ENCODE measurements at regions of chr2 and their contacts with region 1.

Region 1: DNA sequence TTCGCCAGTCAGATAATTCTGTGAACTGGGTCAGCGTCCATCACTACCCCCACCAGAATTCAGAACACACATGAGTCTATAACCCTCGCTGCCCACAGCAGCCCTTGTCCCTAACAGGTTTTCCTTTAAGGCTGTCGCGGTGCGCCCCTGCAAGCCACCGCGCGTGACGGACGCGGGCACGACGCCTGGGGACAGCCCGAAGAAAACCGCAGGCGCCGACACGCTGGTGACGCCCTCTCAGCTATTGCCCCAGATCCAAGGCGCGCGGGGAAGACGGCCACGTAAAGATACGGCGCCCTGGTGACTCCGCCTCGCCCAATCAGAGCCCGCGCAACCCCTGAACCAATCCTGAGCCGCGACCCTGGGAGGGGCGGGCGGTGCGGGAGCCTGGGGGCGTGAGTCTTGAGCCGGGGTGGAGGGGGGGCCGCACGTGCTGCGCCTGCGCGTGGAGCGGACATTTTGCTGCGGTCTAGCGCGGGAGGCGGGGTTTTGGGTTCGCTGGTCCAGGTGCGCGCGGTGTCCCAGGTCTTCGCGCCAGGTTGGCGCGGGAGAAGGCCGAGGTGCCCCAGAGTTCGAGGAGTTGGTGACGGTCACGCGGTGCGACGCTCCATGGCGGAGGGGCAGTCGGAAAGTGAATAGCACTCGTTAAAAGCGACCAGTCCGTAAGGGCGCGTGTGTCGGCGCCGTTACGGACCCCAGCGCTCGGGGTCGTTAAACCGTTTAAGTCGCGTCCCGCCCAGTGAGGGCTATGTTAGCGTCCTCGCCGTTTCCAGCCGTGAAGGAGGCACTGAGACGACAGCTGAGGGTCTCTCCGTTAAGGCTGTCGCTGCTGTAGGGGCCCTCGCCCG is 15.9 kb downstream of the NMUR1 start:
- DNase-seq: peak; percentile 93 to 99 (median 98)
- H3K4me3 ChIP-seq: peak overlapping the region; percentile 80 to 93 (median 86)
- H3K4me3 Mint-ChIP-seq: peak overlapping the region; percentile 83 to 95
- H3K27ac ChIP-seq: peak overlapping the region; percentile 67 to 89
- H3K27ac Mint-ChIP-seq: peak overlapping the region; percentile 91 to 97 (median 94)
- H3K4me1 ChIP-seq: peaks cover 6 to 11% of the 10 kb centered on the region in 2 donors
- H3K4me1 Mint-ChIP-seq: peaks cover 12% of the 10 kb centered on the region
- H3K27me3 ChIP-seq: no peaks in the 10 kb centered on the region
- H3K27me3 Mint-ChIP-seq: peaks cover 0 to 6% (median 5%) of the 10 kb centered on the region in 3 donors
- CTCF ChIP-seq: no peak

Region 2: GRCh38 chr2:231241755-231242507 is 272.4 kb before region 1 on chr2:
- intact Hi-C with region 1: no loop called
- DNase-seq: peak; percentile 29 to 34 (median 33)
- H3K4me3 ChIP-seq: peak overlapping the region in 1 of 3 experiments; percentile 22
- H3K4me3 Mint-ChIP-seq: peak overlapping the region in 1 of 2 donors; percentile 64
- H3K27ac ChIP-seq: peak overlapping the region in 1 of 2 donors; percentile 50
- H3K27ac Mint-ChIP-seq: peak overlapping the region; percentile 10 to 88 (median 63)
- H3K4me1 ChIP-seq: peaks cover 22 to 27% of the 10 kb centered on the region in 2 donors
- H3K4me1 Mint-ChIP-seq: peaks cover 26% of the 10 kb centered on the region
- H3K27me3 ChIP-seq: no peaks in the 10 kb centered on the region
- H3K27me3 Mint-ChIP-seq: peaks cover 2 to 3% (median 3%) of the 10 kb centered on the region in 3 donors
- CTCF ChIP-seq: no peak

Region 3: DNA sequence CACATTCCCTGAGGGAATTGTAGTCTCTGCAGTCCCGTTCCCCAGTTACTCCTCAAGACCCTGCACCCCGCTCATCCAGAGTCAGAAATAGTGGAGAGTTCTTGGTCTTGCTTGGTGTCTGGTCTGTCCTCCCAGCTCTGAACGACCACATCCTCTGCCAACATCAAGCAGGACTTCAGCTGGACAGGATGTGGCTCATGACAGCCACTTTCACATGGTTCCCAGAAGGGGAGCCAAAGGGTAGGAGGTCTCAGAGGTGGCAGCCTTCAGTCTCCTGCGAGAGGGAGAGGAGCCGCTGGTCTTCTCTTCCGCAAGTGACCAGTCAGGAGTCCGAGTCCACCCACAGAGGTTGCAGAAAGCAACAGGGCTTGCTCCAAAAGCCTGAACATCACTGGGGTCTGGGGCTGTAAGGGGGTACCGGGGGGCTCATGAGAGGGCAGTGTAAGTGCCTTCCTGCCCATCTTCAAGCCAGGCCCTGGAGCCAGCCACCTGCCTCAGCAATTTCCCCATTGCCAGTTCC is 89.0 kb before region 1 on chr2:
- intact Hi-C with region 1: no loop called
- DNase-seq: no peak
- H3K4me3 ChIP-seq: no peak overlapping the region
- H3K4me3 Mint-ChIP-seq: no peak overlapping the region
- H3K27ac ChIP-seq: no peak overlapping the region
- H3K27ac Mint-ChIP-seq: no peak overlapping the region
- H3K4me1 ChIP-seq: no peaks in the 10 kb centered on the region
- H3K4me1 Mint-ChIP-seq: peaks cover 9% of the 10 kb centered on the region
- H3K27me3 ChIP-seq: no peaks in the 10 kb centered on the region
- H3K27me3 Mint-ChIP-seq: peaks cover 1 to 3% (median 1%) of the 10 kb centered on the region in 3 donors
- CTCF ChIP-seq: no peak

Region 4: GRCh38 chr2:231463698-231464575 is 50.4 kb before region 1 on chr2 and contains the start of gene NCL:
- intact Hi-C with region 1: loop called (anchors 5 kb)
- DNase-seq: peak; percentile 96 to 97 (median 97)
- H3K4me3 ChIP-seq: peak within 1 kb of the TSS; percentile 75 to 93 (median 85)
- H3K4me3 Mint-ChIP-seq: peak within 1 kb of the TSS; percentile 94 to 96
- H3K27ac ChIP-seq: peak within 1 kb of the TSS; percentile 91 to 98
- H3K27ac Mint-ChIP-seq: peak within 1 kb of the TSS; percentile 97 to 99 (median 99)
- H3K4me1 ChIP-seq: peaks cover 30 to 38% of the 10 kb centered on the region in 2 donors
- H3K4me1 Mint-ChIP-seq: peaks cover 32% of the 10 kb centered on the region
- H3K27me3 ChIP-seq: no peaks in the 10 kb centered on the region
- H3K27me3 Mint-ChIP-seq: peaks cover 0 to 2% (median 0%) of the 10 kb centered on the region in 3 donors
- CTCF ChIP-seq: no peak
- polyA plus RNA-seq, gene NCL: 26.2 to 143 (median 106) TPM

Region 5: DNA sequence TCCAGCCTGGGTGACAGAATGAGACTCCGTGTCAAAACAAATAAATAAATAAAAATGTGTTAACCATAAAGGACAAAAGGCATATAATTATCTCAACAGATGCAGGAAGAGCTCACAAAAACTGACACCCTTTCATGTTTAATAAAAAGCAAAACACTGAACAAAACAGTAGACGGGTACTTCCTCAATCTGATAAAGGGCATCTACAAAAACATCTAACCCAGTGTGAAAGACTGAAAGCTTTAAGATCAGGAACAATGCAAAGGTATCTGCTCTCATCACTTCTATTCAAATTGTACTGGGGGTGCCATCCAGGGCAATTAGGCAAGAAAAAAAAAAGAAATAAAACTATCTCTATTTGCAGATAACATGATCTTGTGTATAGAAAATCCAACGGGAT is 38.4 kb before region 1 on chr2:
- intact Hi-C with region 1: no loop called
- DNase-seq: no peak
- H3K4me3 ChIP-seq: no peak overlapping the region
- H3K4me3 Mint-ChIP-seq: no peak overlapping the region
- H3K27ac ChIP-seq: no peak overlapping the region
- H3K27ac Mint-ChIP-seq: no peak overlapping the region
- H3K4me1 ChIP-seq: peaks cover 2 to 6% of the 10 kb centered on the region in 2 donors
- H3K4me1 Mint-ChIP-seq: peaks cover 15% of the 10 kb centered on the region
- H3K27me3 ChIP-seq: no peaks in the 10 kb centered on the region
- H3K27me3 Mint-ChIP-seq: peaks cover 0 to 1% (median 0%) of the 10 kb centered on the region in 3 donors
- CTCF ChIP-seq: no peak

Region 6: GRCh38 chr2:231706731-231707624 is 192.7 kb after region 1 on chr2:
- intact Hi-C with region 1: loop called in 1 of 2 experiments (anchors 10 kb)
- DNase-seq: peak; percentile 98
- H3K4me3 ChIP-seq: peak overlapping the region; percentile 87 to 99 (median 92)
- H3K4me3 Mint-ChIP-seq: peak overlapping the region; percentile 88 to 97
- H3K27ac ChIP-seq: peak overlapping the region; percentile 99 to 100
- H3K27ac Mint-ChIP-seq: peak overlapping the region; percentile 98 to 100 (median 100)
- H3K4me1 ChIP-seq: peaks cover 30 to 31% of the 10 kb centered on the region in 2 donors
- H3K4me1 Mint-ChIP-seq: peaks cover 25% of the 10 kb centered on the region
- H3K27me3 ChIP-seq: no peaks in the 10 kb centered on the region
- H3K27me3 Mint-ChIP-seq: no peaks in the 10 kb centered on the region
- CTCF ChIP-seq: peak; percentile 93

Region 7: GRCh38 chr2:231780909-231781797 is 266.8 kb after region 1 on chr2 and contains the start of gene PDE6D:
- intact Hi-C with region 1: loop called in 1 of 2 experiments (anchors 5 kb)
- DNase-seq: peak; percentile 95 to 96 (median 95)
- H3K4me3 ChIP-seq: peak within 1 kb of the TSS; percentile 81 to 97 (median 94)
- H3K4me3 Mint-ChIP-seq: peak within 1 kb of the TSS; percentile 97 to 98
- H3K27ac ChIP-seq: peak within 1 kb of the TSS; percentile 33 to 86
- H3K27ac Mint-ChIP-seq: peak within 1 kb of the TSS; percentile 93 to 98 (median 97)
- H3K4me1 ChIP-seq: peaks cover 24 to 37% of the 10 kb centered on the region in 2 donors
- H3K4me1 Mint-ChIP-seq: peaks cover 37% of the 10 kb centered on the region
- H3K27me3 ChIP-seq: peaks cover 0 to 9% of the 10 kb centered on the region in 2 donors
- H3K27me3 Mint-ChIP-seq: peaks cover 4 to 13% (median 7%) of the 10 kb centered on the region in 3 donors
- CTCF ChIP-seq: no peak
- polyA plus RNA-seq, gene PDE6D: 28.4 to 54.6 (median 50.5) TPM

Region 8: GRCh38 chr2:232697100-232697865 is 1183.0 kb after region 1 on chr2 and contains the start of gene GIGYF2:
- intact Hi-C with region 1: loop called in 1 of 2 experiments (anchors 10 kb)
- DNase-seq: peak; percentile 91 to 93 (median 92)
- H3K4me3 ChIP-seq: peak within 1 kb of the TSS; percentile 68 to 91 (median 87)
- H3K4me3 Mint-ChIP-seq: peak within 1 kb of the TSS; percentile 90 to 96
- H3K27ac ChIP-seq: peak within 1 kb of the TSS; percentile 87 to 95
- H3K27ac Mint-ChIP-seq: peak within 1 kb of the TSS; percentile 89 to 96 (median 93)
- H3K4me1 ChIP-seq: peaks cover 21 to 33% of the 10 kb centered on the region in 2 donors
- H3K4me1 Mint-ChIP-seq: peaks cover 34% of the 10 kb centered on the region
- H3K27me3 ChIP-seq: no peaks in the 10 kb centered on the region
- H3K27me3 Mint-ChIP-seq: peaks cover 2 to 5% (median 4%) of the 10 kb centered on the region in 3 donors
- CTCF ChIP-seq: no peak
- polyA plus RNA-seq, gene GIGYF2: 7.7 to 20.7 (median 17.3) TPM

Measured in CD14-positive monocyte (primary cell).